Heart left ventricle (tissue), 16 donors: ENCODE measurements at regions of chr1 and their contacts with region 1.

Region 1: GRCh38 chr1:29698033-29698432 is 461.7 kb downstream of the PTPRU start:
- DNase-seq: no peak
- ATAC-seq: peak in 1 of 4 donors; percentile 25
- H3K4me3 ChIP-seq: no peak overlapping the region
- H3K27ac ChIP-seq: no peak overlapping the region
- H3K4me1 ChIP-seq: no peaks in the 10 kb centered on the region
- H3K27me3 ChIP-seq: peaks cover 0 to 27% (median 7%) of the 10 kb centered on the region in 9 donors
- CTCF ChIP-seq: peak in 5 of 12 donors; percentile 11 to 27 (median 20)
- POLR2A ChIP-seq: no peak

Region 2: GRCh38 chr1:29259802-29260441 is 438.1 kb before region 1 on chr1:
- intact Hi-C with region 1: loop called in 1 of 10 experiments (anchors 10 kb)
- DNase-seq: peak; percentile 45 to 79 (median 52)
- ATAC-seq: peak; percentile 29 to 90 (median 79)
- H3K4me3 ChIP-seq: peak overlapping the region; percentile 29 to 67 (median 56)
- H3K27ac ChIP-seq: peak overlapping the region in 1 of 12 donors; percentile 47
- H3K4me1 ChIP-seq: peaks cover 0 to 17% (median 9%) of the 10 kb centered on the region in 12 donors
- H3K27me3 ChIP-seq: peaks cover 0 to 32% (median 0%) of the 10 kb centered on the region in 9 donors
- CTCF ChIP-seq: no peak
- POLR2A ChIP-seq: no peak

Region 3: DNA sequence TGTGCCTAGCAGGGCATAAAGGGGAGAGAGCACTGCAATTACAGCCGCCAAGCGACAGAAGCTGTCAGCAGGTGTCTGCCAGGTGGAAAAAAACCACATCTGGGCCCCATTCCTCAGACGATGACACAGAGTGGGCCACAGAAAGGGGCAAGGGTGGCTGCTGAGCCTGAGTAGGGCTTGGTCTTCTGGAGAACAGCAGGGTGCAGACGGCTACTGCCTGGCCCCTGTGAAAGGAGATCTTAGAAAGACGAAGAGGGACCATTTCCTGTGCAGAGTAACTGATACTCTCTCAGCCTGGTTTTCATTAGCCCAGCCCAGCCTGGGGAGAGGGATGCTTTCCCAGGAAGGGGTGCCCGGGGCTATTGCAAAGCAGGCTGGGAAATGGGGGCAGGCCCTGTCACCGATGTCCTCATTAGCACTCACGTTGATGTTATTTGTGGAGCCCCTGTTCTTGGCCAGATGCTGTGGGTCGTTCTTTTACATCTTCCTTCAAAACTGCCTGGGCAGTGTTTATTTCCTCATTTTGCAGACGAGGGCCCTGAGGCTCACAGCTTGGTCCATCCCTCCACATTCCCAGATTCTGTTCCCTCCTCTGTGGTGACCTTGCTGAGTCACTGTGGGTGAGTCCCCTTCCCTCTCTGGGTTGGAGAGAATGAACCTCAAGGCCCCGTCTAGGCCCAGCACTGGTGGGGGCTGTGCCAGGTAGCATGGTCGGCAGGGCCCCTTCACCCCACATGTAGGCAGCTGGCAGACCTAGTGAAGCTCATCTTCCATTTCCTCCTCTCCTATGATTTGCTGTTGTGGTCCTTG is 11.1 kb after region 1 on chr1:
- intact Hi-C with region 1: no loop called
- DNase-seq: no peak
- ATAC-seq: peak in 2 of 4 donors; percentile 34 to 40
- H3K4me3 ChIP-seq: no peak overlapping the region
- H3K27ac ChIP-seq: peak overlapping the region in 1 of 12 donors; percentile 70
- H3K4me1 ChIP-seq: peaks cover 0 to 41% (median 0%) of the 10 kb centered on the region in 12 donors
- H3K27me3 ChIP-seq: peaks cover 0 to 27% (median 19%) of the 10 kb centered on the region in 9 donors
- CTCF ChIP-seq: no peak
- POLR2A ChIP-seq: no peak